K562 (cell line): ENCODE measurements at regions of chr12 and their contacts with region 1.

Region 1: DNA sequence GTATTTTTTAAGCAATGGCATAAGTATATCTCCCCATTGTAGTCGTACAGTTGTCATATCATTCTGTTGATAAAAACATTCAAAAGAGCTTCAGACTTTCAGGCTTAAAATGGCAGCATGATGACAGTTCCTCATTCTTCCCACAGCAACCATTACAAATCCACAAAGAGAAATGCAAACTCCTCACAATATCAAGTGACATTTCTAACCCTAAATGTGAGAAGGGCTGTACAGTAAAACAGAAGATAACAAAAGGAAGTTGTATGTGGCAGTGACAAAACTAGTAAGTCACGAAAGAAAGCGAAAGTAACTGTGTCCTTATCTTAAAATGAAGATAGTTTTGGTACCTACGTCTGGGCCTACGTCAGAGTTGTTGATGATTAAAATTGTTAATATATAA is 46.7 kb downstream of the GXYLT1 start:
- DNase-seq: peak in 2 of 4 experiments; percentile 14 to 43
- ATAC-seq: peak; percentile 51
- H3K4me3 ChIP-seq: peak overlapping the region; percentile 33
- H3K27ac ChIP-seq: peak overlapping the region; percentile 83
- H3K4me1 ChIP-seq: peaks cover 3 to 7% of the 10 kb centered on the region in 2 experiments; a peak in 3 of 5 replicates
- H3K27me3 ChIP-seq: no peaks in the 10 kb centered on the region
- CTCF ChIP-seq: no peak
- EP300 ChIP-seq: 0 out of 2 replicates have a peak, but pooled peaks have one; percentile 5
- POLR2A ChIP-seq: no peak
- RAD21 ChIP-seq: no peak

Region 2: GRCh38 chr12:42070036-42070435 is 27.9 kb before region 1 on chr12:
- CTCF ChIA-PET with region 1: no interaction called
- POLR2A ChIA-PET with region 1: no interaction called
- in situ Hi-C with region 1: no loop called
- intact Hi-C with region 1: no loop called
- DNase-seq: no peak
- ATAC-seq: no peak
- H3K4me3 ChIP-seq: no peak overlapping the region
- H3K27ac ChIP-seq: no peak overlapping the region
- H3K4me1 ChIP-seq: no peaks in the 10 kb centered on the region
- H3K27me3 ChIP-seq: peaks cover 0 to 6% of the 10 kb centered on the region in 2 experiments; a peak in 3 of 5 replicates
- CTCF ChIP-seq: no peak
- EP300 ChIP-seq: no peak
- POLR2A ChIP-seq: no peak
- RAD21 ChIP-seq: no peak

Region 3: GRCh38 chr12:42144408-42145196 is 46.6 kb after region 1 on chr12 and contains the start of gene GXYLT1:
- CTCF ChIA-PET with region 1: no interaction called
- POLR2A ChIA-PET with region 1: interaction called, 3 read pairs
- in situ Hi-C with region 1: no loop called
- intact Hi-C with region 1: loop called (anchors 5 kb)
- DNase-seq: peak; percentile 92 to 95 (median 94)
- ATAC-seq: peak; percentile 96
- H3K4me3 ChIP-seq: peak within 1 kb of the TSS; percentile 67
- H3K27ac ChIP-seq: peak within 1 kb of the TSS; percentile 74
- H3K4me1 ChIP-seq: peaks cover 13 to 23% of the 10 kb centered on the region in 2 experiments; a peak in 4 of 5 replicates
- H3K27me3 ChIP-seq: no peaks in the 10 kb centered on the region
- CTCF ChIP-seq: 0 out of 6 replicates have a peak, but pooled peaks of 1 of the 3 experiments have one; percentile 1
- EP300 ChIP-seq: no peak
- POLR2A ChIP-seq: peak; percentile 91
- RAD21 ChIP-seq: no peak
- polyA plus RNA-seq, gene GXYLT1: 1.4 to 1.7 TPM

Region 4: DNA sequence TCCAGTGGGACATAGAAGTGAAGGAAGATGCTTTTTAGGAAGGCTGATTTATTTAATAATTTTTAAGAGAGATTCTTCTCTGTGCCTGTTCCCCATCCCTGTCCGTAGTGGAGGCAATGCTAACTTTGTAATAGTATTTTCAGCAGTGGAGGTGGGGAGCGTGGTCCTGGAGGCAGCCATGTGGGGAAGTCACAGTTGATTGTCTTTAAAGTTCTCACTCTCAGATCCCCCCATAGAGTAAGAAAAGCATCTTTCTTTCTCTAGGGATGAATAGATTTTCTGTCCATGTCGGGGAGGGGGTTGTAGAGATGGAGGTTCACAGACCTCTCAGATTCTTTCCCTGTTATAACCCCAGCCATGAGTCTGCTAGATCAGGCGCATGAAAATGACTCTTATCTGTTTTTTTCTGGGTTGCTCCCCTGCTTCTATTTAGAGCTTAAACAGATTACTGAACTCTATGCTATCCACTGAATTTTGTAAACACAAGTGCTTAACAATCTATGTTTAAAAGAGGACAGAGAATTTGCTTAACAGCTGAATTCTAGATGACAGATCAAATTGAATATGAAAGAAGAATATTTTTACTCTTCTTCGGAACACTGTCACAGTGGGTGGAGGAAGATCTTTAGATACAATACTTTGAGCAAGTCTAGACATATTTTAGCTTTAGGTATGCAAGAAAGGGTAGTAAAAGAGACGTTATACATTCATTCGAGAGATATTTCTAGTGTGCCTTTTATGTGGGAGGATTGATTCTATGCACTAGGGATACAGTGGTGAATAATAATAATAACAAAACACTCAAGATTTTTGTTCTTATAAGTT is 1763.3 kb after region 1 on chr12:
- CTCF ChIA-PET with region 1: no interaction called
- POLR2A ChIA-PET with region 1: no interaction called
- in situ Hi-C with region 1: no loop called
- intact Hi-C with region 1: loop called (anchors 10 kb)
- DNase-seq: no peak
- ATAC-seq: no peak
- H3K4me3 ChIP-seq: no peak overlapping the region
- H3K27ac ChIP-seq: no peak overlapping the region
- H3K4me1 ChIP-seq: peaks cover 0 to 4% of the 10 kb centered on the region in 2 experiments; a peak in 1 of 5 replicates
- H3K27me3 ChIP-seq: no peaks in the 10 kb centered on the region; a peak in 1 of 5 replicates
- CTCF ChIP-seq: no peak
- EP300 ChIP-seq: no peak
- POLR2A ChIP-seq: no peak
- RAD21 ChIP-seq: no peak